Mammary epithelial cell (primary cell): ENCODE measurements at regions of chr5 and their contacts with region 1.

Region 1: GRCh38 chr5:143142596-143143435 is 260.7 kb downstream of the NR3C1 start:
- DNase-seq: peak; percentile 93
- H3K4me3 ChIP-seq: peak overlapping the region in 2 of 3 experiments; percentile 10 to 17
- H3K27ac ChIP-seq: peak overlapping the region; percentile 98
- H3K4me1 ChIP-seq: peaks cover 39% of the 10 kb centered on the region
- H3K27me3 ChIP-seq: no peaks in the 10 kb centered on the region
- CTCF ChIP-seq: no peak

Region 2: GRCh38 chr5:142201471-142201887 is 941.3 kb before region 1 on chr5:
- CTCF ChIA-PET with region 1: no interaction called
- dilution Hi-C with region 1: no loop called
- in situ Hi-C with region 1: no loop called
- intact Hi-C with region 1: no loop called
- DNase-seq: peak; percentile 93
- H3K4me3 ChIP-seq: no peak overlapping the region
- H3K27ac ChIP-seq: no peak overlapping the region
- H3K4me1 ChIP-seq: peaks cover 13% of the 10 kb centered on the region
- H3K27me3 ChIP-seq: no peaks in the 10 kb centered on the region
- CTCF ChIP-seq: no peak

Region 3: DNA sequence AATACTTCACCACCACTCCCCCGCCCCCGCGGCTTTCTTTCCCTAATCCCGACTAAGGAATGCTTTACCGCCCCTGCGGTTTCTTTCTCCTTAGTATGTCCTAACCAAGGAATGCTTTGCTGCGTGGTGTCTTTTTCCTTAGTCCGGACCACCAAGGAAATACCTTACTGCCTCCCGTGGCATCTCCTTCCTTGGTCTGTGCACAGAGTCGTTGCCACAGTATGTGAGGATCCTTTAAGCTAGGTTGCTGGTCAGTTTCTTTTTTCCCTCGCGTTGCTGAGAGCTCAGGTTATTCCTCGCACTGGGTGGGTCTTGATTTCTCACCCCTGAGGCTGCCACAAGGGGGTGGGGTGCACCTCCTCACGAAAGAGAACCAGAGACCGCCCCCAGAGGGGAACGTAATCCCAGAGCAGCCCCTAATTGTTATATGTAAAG is 48.7 kb before region 1 on chr5:
- CTCF ChIA-PET with region 1: no interaction called
- dilution Hi-C with region 1: no loop called
- in situ Hi-C with region 1: no loop called
- intact Hi-C with region 1: loop called (anchors 1 kb)
- DNase-seq: peak; percentile 34
- H3K4me3 ChIP-seq: no peak overlapping the region
- H3K27ac ChIP-seq: peak overlapping the region; percentile 39
- H3K4me1 ChIP-seq: peaks cover 3% of the 10 kb centered on the region
- H3K27me3 ChIP-seq: no peaks in the 10 kb centered on the region
- CTCF ChIP-seq: no peak

Region 4: DNA sequence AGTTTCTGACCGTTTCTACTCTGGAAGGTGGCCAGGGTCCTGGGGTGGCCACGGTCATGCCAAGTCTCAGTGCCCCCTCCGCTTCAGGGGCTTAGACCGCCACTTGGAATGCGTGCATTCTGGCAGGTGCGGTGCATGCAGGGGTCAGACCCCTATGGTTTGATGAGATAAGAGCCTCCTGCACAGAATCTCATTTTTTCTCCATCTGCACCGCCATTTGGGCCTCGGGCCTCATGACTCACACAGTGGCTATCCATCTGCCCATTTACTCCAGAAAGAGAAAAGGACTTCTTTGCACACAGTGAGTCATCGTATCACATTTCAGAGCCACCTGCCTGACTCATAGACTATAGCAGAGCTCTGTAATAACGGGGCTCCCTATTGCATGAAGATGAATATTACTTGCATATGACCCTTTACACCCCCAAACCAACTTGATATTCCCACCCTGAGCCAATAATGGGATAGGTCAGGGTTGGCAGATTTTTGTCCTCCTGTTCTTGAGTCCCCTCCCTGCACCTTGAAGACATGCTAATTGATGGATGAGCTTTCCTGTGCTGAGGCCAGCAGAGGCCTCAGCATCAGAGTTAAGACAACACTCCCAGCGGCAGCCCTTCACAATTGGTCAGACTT is 103.2 kb after region 1 on chr5:
- CTCF ChIA-PET with region 1: no interaction called
- dilution Hi-C with region 1: no loop called
- in situ Hi-C with region 1: no loop called
- intact Hi-C with region 1: no loop called
- DNase-seq: peak; percentile 96
- H3K4me3 ChIP-seq: no peak overlapping the region
- H3K27ac ChIP-seq: peak overlapping the region; percentile 99
- H3K4me1 ChIP-seq: peaks cover 66% of the 10 kb centered on the region
- H3K27me3 ChIP-seq: no peaks in the 10 kb centered on the region
- CTCF ChIP-seq: no peak